ENCODE measurements at regions of chr3 and their contacts with region 1.

Region 1: DNA sequence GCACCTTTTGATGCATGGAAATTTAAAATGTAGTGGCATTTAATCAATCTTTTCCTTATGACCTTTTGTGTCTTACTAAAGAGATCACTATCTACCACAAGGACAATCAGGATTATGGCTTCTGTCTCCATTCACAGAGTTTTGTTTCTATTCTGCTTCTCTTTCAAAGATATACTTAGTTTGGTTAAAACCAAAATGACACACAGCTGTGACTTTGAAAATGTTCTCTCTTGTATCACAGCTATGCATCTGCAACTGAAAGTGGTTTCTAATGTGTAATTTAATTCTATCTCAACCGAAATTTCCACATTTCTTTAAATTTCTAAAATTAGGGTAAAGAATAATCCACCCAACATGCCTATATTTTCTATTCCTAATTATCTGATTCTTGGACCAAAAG is 27.7 kb downstream of the HLTF start:
- DNase-seq: no peak
- H3K4me3 ChIP-seq: no peak overlapping the region
- H3K27ac ChIP-seq: no peak overlapping the region
- H3K4me1 ChIP-seq: no peaks in the 10 kb centered on the region
- H3K27me3 ChIP-seq: no peaks in the 10 kb centered on the region
- CTCF ChIP-seq: no peak

Region 2: GRCh38 chr3:148880681-148881080 is 177.9 kb before region 1 on chr3:
- CTCF ChIA-PET with region 1: no interaction called
- POLR2A ChIA-PET with region 1: no interaction called
- intact Hi-C with region 1: no loop called
- DNase-seq: no peak
- H3K4me3 ChIP-seq: no peak overlapping the region
- H3K27ac ChIP-seq: no peak overlapping the region
- H3K4me1 ChIP-seq: no peaks in the 10 kb centered on the region
- H3K27me3 ChIP-seq: no peaks in the 10 kb centered on the region
- CTCF ChIP-seq: peak; percentile 43; the same call in 1 of the 2 replicates

Region 3: DNA sequence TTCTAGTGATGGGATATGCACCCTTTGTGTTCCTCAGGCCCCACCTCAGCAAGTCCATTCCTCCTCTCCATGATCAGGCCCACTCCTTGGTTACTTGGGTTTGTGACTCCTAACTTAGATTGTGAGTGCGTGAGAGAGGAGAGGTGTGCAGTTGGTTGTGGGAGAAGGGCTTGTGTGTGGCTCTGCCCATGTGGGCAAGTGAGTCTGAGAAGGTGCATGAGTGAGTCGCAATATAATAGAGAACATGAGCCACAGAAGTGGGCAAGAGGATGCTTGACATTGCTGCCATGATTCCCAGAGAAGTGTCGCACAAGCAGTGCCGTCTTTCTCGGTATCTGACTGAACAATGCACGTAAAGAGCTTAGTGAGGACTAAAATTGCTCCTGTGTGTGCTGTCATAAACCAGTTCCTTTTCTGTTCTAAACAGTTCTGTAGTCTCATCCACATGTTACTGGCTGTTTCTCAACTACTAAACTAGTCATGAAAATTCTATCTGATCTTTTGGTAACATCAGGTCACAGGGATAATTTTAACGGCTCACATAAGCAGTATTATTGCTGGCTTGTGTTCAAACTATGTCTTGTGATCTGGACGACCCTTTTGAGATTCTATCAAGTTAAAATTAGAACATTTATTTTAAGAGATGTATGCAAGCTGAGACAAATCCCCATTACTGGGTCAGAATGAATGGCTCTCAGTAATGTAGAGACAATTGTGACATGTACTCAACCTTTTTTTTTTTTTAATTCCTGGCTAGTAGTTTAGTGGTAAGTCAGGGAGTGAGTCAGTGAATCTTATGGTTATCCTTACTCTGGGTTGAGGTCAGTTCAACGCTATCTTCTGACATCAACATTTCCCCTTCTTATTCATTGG is 41.7 kb before region 1 on chr3:
- CTCF ChIA-PET with region 1: no interaction called
- POLR2A ChIA-PET with region 1: no interaction called
- intact Hi-C with region 1: loop called (anchors 5 kb)
- DNase-seq: no peak
- H3K4me3 ChIP-seq: no peak overlapping the region
- H3K27ac ChIP-seq: no peak overlapping the region
- H3K4me1 ChIP-seq: no peaks in the 10 kb centered on the region
- H3K27me3 ChIP-seq: no peaks in the 10 kb centered on the region
- CTCF ChIP-seq: no peak